PC-3 (cell line): ENCODE measurements at regions of chr18 and their contacts with region 1.

Region 1: DNA sequence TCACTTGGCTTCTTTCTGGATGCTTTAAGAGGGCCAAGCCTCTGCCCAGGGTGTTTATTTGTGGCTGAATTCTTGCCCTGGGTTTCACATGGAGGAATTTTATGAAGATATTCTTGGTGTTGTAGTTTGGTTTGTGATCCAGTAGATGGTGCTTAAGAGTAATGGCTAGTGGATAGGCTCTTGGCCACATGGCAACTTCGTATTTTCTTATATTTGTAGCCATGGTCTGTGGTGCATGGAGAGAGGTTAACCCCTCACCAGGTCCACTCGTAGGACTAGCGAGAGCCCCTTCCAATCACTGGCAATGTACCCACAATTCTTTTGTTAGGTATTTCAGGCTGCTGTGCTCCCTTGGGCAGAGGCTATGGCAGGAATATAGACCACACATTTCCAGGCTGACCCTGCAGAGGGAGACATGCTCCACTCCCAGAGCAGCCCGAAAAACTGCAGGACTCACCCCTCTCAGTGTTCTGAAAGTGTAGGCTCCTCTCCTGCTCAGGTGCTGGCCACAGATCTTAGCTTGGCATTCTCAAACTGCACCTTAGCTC is 582.1 kb upstream of the SETBP1 start:
- DNase-seq: peak; percentile 53
- ATAC-seq: peak; percentile 94
- H3K4me3 ChIP-seq: peak overlapping the region; percentile 53; the same call in 1 of the 2 replicates
- H3K27ac ChIP-seq: no peak overlapping the region
- H3K4me1 ChIP-seq: no peaks in the 10 kb centered on the region
- H3K27me3 ChIP-seq: no peaks in the 10 kb centered on the region
- CTCF ChIP-seq: peak; percentile 69

Region 2: DNA sequence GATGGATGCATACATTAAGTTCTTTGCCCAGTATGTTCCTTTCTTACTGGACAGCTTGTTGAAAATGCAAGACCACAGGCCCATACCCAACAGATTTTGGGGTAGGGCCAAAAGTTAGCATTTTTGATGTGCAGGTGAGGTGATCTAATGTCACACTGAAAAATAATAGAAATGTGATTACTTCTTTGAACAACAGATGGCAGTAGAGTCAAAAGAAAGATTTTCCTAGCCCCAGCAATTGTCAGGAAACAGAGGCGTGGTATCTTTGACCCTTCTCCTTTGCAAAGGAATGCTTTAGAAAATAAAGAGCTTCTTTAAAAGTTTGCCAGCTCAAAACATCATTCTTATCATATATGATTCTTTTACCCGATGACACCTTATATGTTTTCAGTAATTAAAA is 477.7 kb before region 1 on chr18:
- CTCF ChIA-PET with region 1: no interaction called
- POLR2A ChIA-PET with region 1: no interaction called
- intact Hi-C with region 1: loop called (anchors 1 kb)
- DNase-seq: peak; percentile 50
- ATAC-seq: no peak
- H3K4me3 ChIP-seq: no peak overlapping the region
- H3K27ac ChIP-seq: no peak overlapping the region
- H3K4me1 ChIP-seq: no peaks in the 10 kb centered on the region
- H3K27me3 ChIP-seq: no peaks in the 10 kb centered on the region
- CTCF ChIP-seq: peak; percentile 43; the same call in 1 of the 2 replicates

Region 3: GRCh38 chr18:43789234-43790000 is 309.2 kb before region 1 on chr18:
- CTCF ChIA-PET with region 1: no interaction called
- POLR2A ChIA-PET with region 1: no interaction called
- intact Hi-C with region 1: loop called (anchors 5 kb)
- DNase-seq: no peak
- ATAC-seq: peak; percentile 52; the same call in 1 of the 2 replicates
- H3K4me3 ChIP-seq: no peak overlapping the region
- H3K27ac ChIP-seq: no peak overlapping the region
- H3K4me1 ChIP-seq: peaks cover 6% of the 10 kb centered on the region; the same call in 1 of the 2 replicates
- H3K27me3 ChIP-seq: no peaks in the 10 kb centered on the region
- CTCF ChIP-seq: peak; percentile 33

Region 4: GRCh38 chr18:44325903-44326635 is 227.4 kb after region 1 on chr18:
- CTCF ChIA-PET with region 1: no interaction called
- POLR2A ChIA-PET with region 1: no interaction called
- intact Hi-C with region 1: loop called (anchors 1 kb)
- DNase-seq: peak; percentile 51
- ATAC-seq: peak; percentile 48
- H3K4me3 ChIP-seq: no peak overlapping the region
- H3K27ac ChIP-seq: no peak overlapping the region
- H3K4me1 ChIP-seq: no peaks in the 10 kb centered on the region
- H3K27me3 ChIP-seq: no peaks in the 10 kb centered on the region
- CTCF ChIP-seq: peak; percentile 65

Region 5: GRCh38 chr18:45212181-45213039 is 1113.8 kb after region 1 on chr18:
- CTCF ChIA-PET with region 1: no interaction called
- POLR2A ChIA-PET with region 1: no interaction called
- intact Hi-C with region 1: loop called (anchors 10 kb)
- DNase-seq: peak; percentile 69
- ATAC-seq: peak; percentile 84
- H3K4me3 ChIP-seq: no peak overlapping the region
- H3K27ac ChIP-seq: no peak overlapping the region
- H3K4me1 ChIP-seq: peaks cover 3% of the 10 kb centered on the region; the same call in 1 of the 2 replicates
- H3K27me3 ChIP-seq: no peaks in the 10 kb centered on the region
- CTCF ChIP-seq: peak; percentile 89

Region 6: GRCh38 chr18:45384137-45384961 is 1285.7 kb after region 1 on chr18:
- CTCF ChIA-PET with region 1: no interaction called
- POLR2A ChIA-PET with region 1: no interaction called
- intact Hi-C with region 1: loop called (anchors 2 kb)
- DNase-seq: peak; percentile 51
- ATAC-seq: peak; percentile 46; the same call in 1 of the 2 replicates
- H3K4me3 ChIP-seq: no peak overlapping the region
- H3K27ac ChIP-seq: no peak overlapping the region
- H3K4me1 ChIP-seq: no peaks in the 10 kb centered on the region; the same call in 1 of the 2 replicates
- H3K27me3 ChIP-seq: no peaks in the 10 kb centered on the region
- CTCF ChIP-seq: peak; percentile 69